CD8-positive, alpha-beta T cell (primary cell): ENCODE measurements at regions of chr19 and their contacts with region 1.

Region 1: GRCh38 chr19:43754503-43755255 is at the start of gene SMG9:
- DNase-seq: peak; percentile 95 to 99 (median 99)
- ATAC-seq: peak; percentile 80
- H3K4me3 ChIP-seq: peak within 1 kb of the TSS; percentile 71 to 72
- H3K4me3 Mint-ChIP-seq: peak within 1 kb of the TSS; percentile 92
- H3K27ac ChIP-seq: peak within 1 kb of the TSS; percentile 85 to 97
- H3K27ac Mint-ChIP-seq: peak within 1 kb of the TSS; percentile 98
- H3K4me1 ChIP-seq: peaks cover 21% of the 10 kb centered on the region
- H3K4me1 Mint-ChIP-seq: peaks cover 46% of the 10 kb centered on the region
- H3K27me3 ChIP-seq: no peaks in the 10 kb centered on the region
- H3K27me3 Mint-ChIP-seq: no peaks in the 10 kb centered on the region
- CTCF ChIP-seq: no peak
- total RNA-seq, gene SMG9: 32.2 to 34.3 TPM

Region 2: DNA sequence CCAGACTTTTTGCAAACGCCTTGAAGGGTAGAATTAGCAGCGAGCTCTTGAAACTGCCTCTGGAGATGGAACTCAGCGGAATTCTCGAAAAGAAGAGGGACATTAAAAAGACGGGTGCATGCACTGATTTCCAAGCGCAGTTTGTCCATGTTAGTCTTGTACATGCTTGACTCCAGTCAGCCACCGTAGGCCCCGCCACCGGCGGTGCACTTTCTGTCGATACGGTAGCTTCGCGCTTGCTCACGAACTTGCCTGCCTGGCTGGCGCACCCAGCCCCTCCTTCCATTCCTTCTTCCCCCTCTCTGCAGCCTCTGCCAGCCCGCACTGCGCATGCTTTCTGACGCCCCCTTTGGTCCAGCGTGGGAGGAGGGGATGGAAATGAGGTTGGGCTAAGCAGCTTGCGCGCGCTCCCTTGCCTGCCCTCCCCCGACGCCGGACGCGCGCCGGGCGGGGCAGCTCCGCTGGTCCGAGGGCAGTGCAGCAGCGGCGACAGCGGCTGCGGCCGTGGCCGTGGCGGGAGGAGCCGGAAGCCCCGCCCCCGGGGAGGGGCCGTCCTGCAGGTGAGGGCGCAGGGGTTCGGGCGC is 221.6 kb before region 1 on chr19 and contains the start of gene ZNF575:
- CTCF ChIA-PET with region 1: no interaction called
- POLR2A ChIA-PET with region 1: no interaction called
- intact Hi-C with region 1: loop called in 1 of 2 experiments (anchors 10 kb)
- DNase-seq: peak; percentile 63 to 94 (median 87)
- ATAC-seq: peak; percentile 43
- H3K4me3 ChIP-seq: peak within 1 kb of the TSS; percentile 65 to 79
- H3K4me3 Mint-ChIP-seq: peak within 1 kb of the TSS; percentile 98
- H3K27ac ChIP-seq: peak within 1 kb of the TSS; percentile 55 to 76
- H3K27ac Mint-ChIP-seq: peak within 1 kb of the TSS; percentile 97
- H3K4me1 ChIP-seq: peaks cover 7% of the 10 kb centered on the region
- H3K4me1 Mint-ChIP-seq: peaks cover 19% of the 10 kb centered on the region
- H3K27me3 ChIP-seq: no peaks in the 10 kb centered on the region
- H3K27me3 Mint-ChIP-seq: no peaks in the 10 kb centered on the region
- CTCF ChIP-seq: no peak
- total RNA-seq, gene ZNF575: 2.4 to 3.4 TPM

Region 3: DNA sequence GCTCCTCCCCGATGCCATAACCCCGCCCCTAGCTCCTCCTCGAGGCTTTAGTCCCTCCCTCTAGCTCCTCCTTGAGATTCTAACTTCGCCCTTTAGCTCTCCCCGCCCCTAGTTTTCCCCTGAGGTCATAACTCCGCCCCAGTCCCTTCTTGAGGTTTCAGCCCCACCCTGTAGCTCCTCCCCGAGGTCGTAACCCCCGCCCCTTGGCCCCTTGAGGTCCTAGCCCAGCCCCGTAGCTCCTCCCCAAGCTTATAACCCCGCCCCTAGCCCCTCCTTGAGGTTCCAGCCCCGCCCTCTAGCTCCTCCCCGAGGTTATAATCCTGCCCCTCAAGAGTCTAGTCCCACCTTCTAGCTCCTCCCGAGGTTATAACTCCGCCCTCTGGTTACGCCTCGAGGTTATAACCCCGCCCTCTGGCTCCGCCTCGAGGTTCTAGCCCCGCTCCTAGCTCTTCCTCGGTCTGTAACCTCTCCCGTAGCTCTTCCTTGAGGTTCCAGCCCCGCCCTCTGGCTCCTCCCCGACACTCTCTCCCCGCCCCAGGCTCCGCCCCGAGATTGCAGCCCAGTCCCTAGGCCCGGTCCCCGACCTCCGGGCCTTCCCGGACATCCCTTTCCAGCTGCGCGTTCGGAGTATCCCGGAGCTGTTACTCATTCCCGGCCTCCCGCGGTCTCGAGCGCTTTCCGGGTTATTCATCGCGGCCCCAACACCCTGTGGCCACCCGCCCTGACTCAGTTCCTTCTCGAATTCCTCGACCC is 86.1 kb before region 1 on chr19:
- CTCF ChIA-PET with region 1: interaction called, 4 read pairs
- POLR2A ChIA-PET with region 1: interaction called, 3 read pairs
- intact Hi-C with region 1: loop called in 1 of 2 experiments (anchors 1 kb)
- DNase-seq: peak; percentile 85 to 97 (median 91)
- ATAC-seq: peak; percentile 87
- H3K4me3 ChIP-seq: peak overlapping the region; percentile 72 to 73
- H3K4me3 Mint-ChIP-seq: peak overlapping the region; percentile 88
- H3K27ac ChIP-seq: peak overlapping the region; percentile 42 to 43
- H3K27ac Mint-ChIP-seq: peak overlapping the region; percentile 57
- H3K4me1 ChIP-seq: peaks cover 42% of the 10 kb centered on the region
- H3K4me1 Mint-ChIP-seq: peaks cover 43% of the 10 kb centered on the region
- H3K27me3 ChIP-seq: no peaks in the 10 kb centered on the region
- H3K27me3 Mint-ChIP-seq: no peaks in the 10 kb centered on the region
- CTCF ChIP-seq: no peak

Region 4: GRCh38 chr19:43765109-43765876 is 10.6 kb after region 1 on chr19:
- CTCF ChIA-PET with region 1: interaction called, 17 read pairs
- POLR2A ChIA-PET with region 1: interaction called, 14 read pairs
- intact Hi-C with region 1: loop called in 1 of 2 experiments (anchors 1 kb)
- DNase-seq: peak in 8 of 9 experiments; percentile 51 to 85 (median 72)
- ATAC-seq: peak; percentile 84
- H3K4me3 ChIP-seq: no peak overlapping the region
- H3K4me3 Mint-ChIP-seq: peak overlapping the region; percentile 58
- H3K27ac ChIP-seq: peak overlapping the region; percentile 24 to 77
- H3K27ac Mint-ChIP-seq: peak overlapping the region; percentile 90
- H3K4me1 ChIP-seq: peaks cover 30% of the 10 kb centered on the region
- H3K4me1 Mint-ChIP-seq: peaks cover 31% of the 10 kb centered on the region
- H3K27me3 ChIP-seq: no peaks in the 10 kb centered on the region
- H3K27me3 Mint-ChIP-seq: no peaks in the 10 kb centered on the region
- CTCF ChIP-seq: no peak

Region 5: GRCh38 chr19:43826787-43827754 is 72.4 kb after region 1 on chr19 and contains the start of gene ZNF283:
- CTCF ChIA-PET with region 1: no interaction called
- POLR2A ChIA-PET with region 1: no interaction called
- intact Hi-C with region 1: loop called in 1 of 2 experiments (anchors 2 kb)
- DNase-seq: peak; percentile 64 to 90 (median 81)
- ATAC-seq: peak; percentile 92
- H3K4me3 ChIP-seq: peak within 1 kb of the TSS; percentile 52 to 69
- H3K4me3 Mint-ChIP-seq: peak within 1 kb of the TSS; percentile 88
- H3K27ac ChIP-seq: no peak within 1 kb of the TSS
- H3K27ac Mint-ChIP-seq: peak within 1 kb of the TSS; percentile 39
- H3K4me1 ChIP-seq: peaks cover 12% of the 10 kb centered on the region
- H3K4me1 Mint-ChIP-seq: peaks cover 22% of the 10 kb centered on the region
- H3K27me3 ChIP-seq: no peaks in the 10 kb centered on the region
- H3K27me3 Mint-ChIP-seq: peaks cover 8% of the 10 kb centered on the region
- CTCF ChIP-seq: no peak
- total RNA-seq, gene ZNF283: 1.3 to 1.4 TPM